Psoas muscle (tissue), 8 donors: ENCODE measurements at regions of chr2 and their contacts with region 1.

Region 1: GRCh38 chr2:232611551-232612218 is 21.7 kb upstream of the EFHD1 start:
- DNase-seq: peak; percentile 74 to 81
- ATAC-seq: peak; percentile 55 to 81 (median 75)
- H3K4me3 ChIP-seq: no peak overlapping the region
- H3K27ac ChIP-seq: no peak overlapping the region
- H3K4me1 ChIP-seq: no peaks in the 10 kb centered on the region
- H3K27me3 ChIP-seq: no peaks in the 10 kb centered on the region
- CTCF ChIP-seq: peak; percentile 72

Region 2: GRCh38 chr2:232668805-232669444 is 57.2 kb after region 1 on chr2:
- intact Hi-C with region 1: loop called (anchors 2 to 5 kb)
- DNase-seq: no peak
- ATAC-seq: peak; percentile 40 to 70 (median 56)
- H3K4me3 ChIP-seq: no peak overlapping the region
- H3K27ac ChIP-seq: no peak overlapping the region
- H3K4me1 ChIP-seq: peaks cover 11% of the 10 kb centered on the region
- H3K27me3 ChIP-seq: no peaks in the 10 kb centered on the region
- CTCF ChIP-seq: peak; percentile 40

Region 3: DNA sequence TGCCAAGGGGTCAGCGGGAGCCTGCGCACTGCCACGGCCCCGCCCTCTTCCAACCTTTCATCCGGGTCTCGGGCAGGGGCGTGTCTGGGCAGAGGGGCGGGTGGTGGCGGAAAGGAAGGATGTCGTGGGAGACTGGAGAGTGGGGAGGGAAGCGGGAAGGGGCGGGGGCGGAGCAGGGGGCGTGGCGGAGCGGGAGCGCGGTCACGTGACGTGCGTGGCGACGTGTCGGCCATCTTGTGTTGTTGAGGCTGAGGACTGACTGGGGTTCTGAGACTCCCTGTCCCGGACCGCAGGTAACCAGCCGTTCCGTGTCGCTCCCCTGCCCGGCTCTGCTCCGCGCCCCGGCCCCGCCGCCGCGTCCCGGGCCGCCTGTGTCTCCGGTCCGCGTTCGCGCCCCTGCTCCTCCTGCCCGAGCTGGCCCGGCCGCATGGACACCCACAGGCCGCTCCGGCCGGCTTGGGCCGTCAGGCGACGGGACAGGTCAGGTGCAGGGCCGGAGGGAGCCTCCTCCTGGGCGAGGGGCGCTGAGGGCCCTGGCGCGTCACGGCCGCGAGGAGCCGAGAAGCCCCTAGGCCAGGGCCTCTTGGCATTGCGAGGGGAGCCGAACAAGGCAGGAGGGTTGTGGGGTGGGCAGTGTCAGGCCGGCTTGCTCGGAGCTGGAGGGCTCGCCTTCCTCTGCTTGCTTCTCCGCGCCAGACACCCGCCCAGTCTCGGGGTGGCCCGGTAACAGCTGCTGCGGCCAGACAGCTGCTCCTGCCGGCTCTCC is 85.6 kb after region 1 on chr2 and contains the start of gene GIGYF2:
- intact Hi-C with region 1: no loop called
- DNase-seq: peak; percentile 97 to 98
- ATAC-seq: peak; percentile 97 to 99 (median 97)
- H3K4me3 ChIP-seq: peak within 1 kb of the TSS; percentile 95
- H3K27ac ChIP-seq: peak within 1 kb of the TSS; percentile 99
- H3K4me1 ChIP-seq: peaks cover 35% of the 10 kb centered on the region
- H3K27me3 ChIP-seq: no peaks in the 10 kb centered on the region
- CTCF ChIP-seq: no peak
- total RNA-seq, gene GIGYF2: 64.3 to 72.6 (median 65.5) TPM

Region 4: DNA sequence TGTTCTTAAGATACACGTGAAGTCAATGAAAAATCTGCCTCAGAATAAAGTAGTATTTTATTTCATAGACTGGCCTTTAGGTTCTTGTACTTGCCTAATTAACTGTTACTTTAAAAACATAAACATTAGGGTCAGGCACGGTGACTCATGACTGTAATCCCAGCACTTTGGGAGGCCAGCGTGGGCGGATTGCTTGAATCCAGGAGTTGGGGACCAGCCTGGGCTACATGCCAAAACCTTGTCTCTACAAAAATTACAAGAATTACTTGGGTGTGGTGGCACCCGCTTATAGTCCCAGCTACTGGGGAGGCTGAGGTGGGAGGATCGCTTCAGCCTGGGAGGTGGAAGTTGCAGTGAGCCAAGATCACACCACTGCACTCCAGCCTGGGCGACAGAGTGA is 242.4 kb after region 1 on chr2:
- intact Hi-C with region 1: loop called in 1 of 2 experiments (anchors 5 kb)
- DNase-seq: no peak
- ATAC-seq: no peak
- H3K4me3 ChIP-seq: no peak overlapping the region
- H3K27ac ChIP-seq: peak overlapping the region; percentile 80
- H3K4me1 ChIP-seq: peaks cover 45% of the 10 kb centered on the region
- H3K27me3 ChIP-seq: no peaks in the 10 kb centered on the region
- CTCF ChIP-seq: no peak

Region 5: DNA sequence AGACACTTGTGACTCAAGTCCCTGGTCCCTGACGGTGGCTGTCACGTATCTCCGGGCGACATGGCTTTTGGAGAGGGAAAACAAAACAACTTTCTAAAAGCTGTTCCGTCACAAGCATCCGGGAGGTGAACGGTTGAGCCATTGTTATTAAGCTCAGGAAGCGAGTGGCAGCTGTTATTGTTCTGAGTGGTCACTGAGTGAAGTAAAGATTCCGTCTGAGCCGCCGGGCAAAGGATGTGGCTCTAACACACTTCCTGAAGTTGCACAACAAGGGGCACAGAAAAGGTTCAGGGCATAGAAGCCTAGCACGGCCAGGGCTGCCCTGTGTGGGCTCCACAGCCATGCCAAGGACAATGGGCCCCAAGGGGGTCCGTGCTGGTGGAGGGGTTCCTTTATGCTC is 472.8 kb after region 1 on chr2:
- intact Hi-C with region 1: no loop called
- DNase-seq: peak; percentile 37 to 65
- ATAC-seq: peak; percentile 39 to 65 (median 57)
- H3K4me3 ChIP-seq: no peak overlapping the region
- H3K27ac ChIP-seq: peak overlapping the region; percentile 77
- H3K4me1 ChIP-seq: peaks cover 20% of the 10 kb centered on the region
- H3K27me3 ChIP-seq: no peaks in the 10 kb centered on the region
- CTCF ChIP-seq: no peak

Region 6: DNA sequence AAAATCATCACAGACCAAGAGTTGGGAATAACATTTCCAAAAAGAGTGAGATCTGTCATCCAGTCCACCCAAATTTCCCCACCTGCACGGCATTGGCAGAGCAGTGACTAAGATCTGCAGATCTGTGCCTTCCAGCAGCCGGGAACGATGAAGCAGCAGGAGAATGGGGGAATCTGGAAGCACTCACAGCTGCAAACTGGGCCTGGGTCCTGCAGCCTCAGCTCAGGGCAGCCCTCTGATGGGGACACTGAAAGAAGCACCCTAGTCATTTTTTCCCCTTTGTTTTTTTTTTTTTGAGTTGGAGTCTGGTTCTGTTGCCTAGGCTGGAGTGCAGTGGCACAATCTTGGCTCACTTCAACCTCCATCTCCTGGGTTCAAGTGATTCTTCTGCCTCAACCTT is 691.6 kb after region 1 on chr2:
- intact Hi-C with region 1: no loop called
- DNase-seq: no peak
- ATAC-seq: no peak
- H3K4me3 ChIP-seq: no peak overlapping the region
- H3K27ac ChIP-seq: no peak overlapping the region
- H3K4me1 ChIP-seq: no peaks in the 10 kb centered on the region
- H3K27me3 ChIP-seq: no peaks in the 10 kb centered on the region
- CTCF ChIP-seq: no peak